ENCODE measurements at regions of chrX and their contacts with region 1.

Region 1: GRCh38 chrX:110163488-110163887 is 154.4 kb downstream of the AMMECR1 start:
- DNase-seq: no peak
- H3K4me3 ChIP-seq: no peak overlapping the region
- H3K27ac ChIP-seq: no peak overlapping the region
- H3K4me1 ChIP-seq: peaks cover 10% of the 10 kb centered on the region
- H3K27me3 ChIP-seq: no peaks in the 10 kb centered on the region
- CTCF ChIP-seq: no peak

Region 2: GRCh38 chrX:109782994-109783700 is 380.3 kb before region 1 on chrX:
- intact Hi-C with region 1: no loop called
- DNase-seq: no peak
- H3K4me3 ChIP-seq: no peak overlapping the region
- H3K27ac ChIP-seq: no peak overlapping the region
- H3K4me1 ChIP-seq: no peaks in the 10 kb centered on the region
- H3K27me3 ChIP-seq: no peaks in the 10 kb centered on the region
- CTCF ChIP-seq: no peak

Region 3: GRCh38 chrX:110407910-110408545 is 244.5 kb after region 1 on chrX:
- intact Hi-C with region 1: loop called (anchors 5 kb)
- DNase-seq: no peak
- H3K4me3 ChIP-seq: no peak overlapping the region
- H3K27ac ChIP-seq: no peak overlapping the region
- H3K4me1 ChIP-seq: peaks cover 3% of the 10 kb centered on the region
- H3K27me3 ChIP-seq: no peaks in the 10 kb centered on the region
- CTCF ChIP-seq: peak; percentile 71

Region 4: GRCh38 chrX:111270339-111270738 is 1106.9 kb after region 1 on chrX and contains the start of gene CAPN6:
- intact Hi-C with region 1: no loop called
- DNase-seq: no peak
- H3K4me3 ChIP-seq: no peak within 1 kb of the TSS
- H3K27ac ChIP-seq: no peak within 1 kb of the TSS
- H3K4me1 ChIP-seq: no peaks in the 10 kb centered on the region
- H3K27me3 ChIP-seq: no peaks in the 10 kb centered on the region
- CTCF ChIP-seq: no peak
- total RNA-seq, gene CAPN6: not detected

Measured in left ventricle myocardium inferior (tissue), 1 donor.